ENCODE measurements at regions of chr9 and their contacts with region 1.

Region 1: DNA sequence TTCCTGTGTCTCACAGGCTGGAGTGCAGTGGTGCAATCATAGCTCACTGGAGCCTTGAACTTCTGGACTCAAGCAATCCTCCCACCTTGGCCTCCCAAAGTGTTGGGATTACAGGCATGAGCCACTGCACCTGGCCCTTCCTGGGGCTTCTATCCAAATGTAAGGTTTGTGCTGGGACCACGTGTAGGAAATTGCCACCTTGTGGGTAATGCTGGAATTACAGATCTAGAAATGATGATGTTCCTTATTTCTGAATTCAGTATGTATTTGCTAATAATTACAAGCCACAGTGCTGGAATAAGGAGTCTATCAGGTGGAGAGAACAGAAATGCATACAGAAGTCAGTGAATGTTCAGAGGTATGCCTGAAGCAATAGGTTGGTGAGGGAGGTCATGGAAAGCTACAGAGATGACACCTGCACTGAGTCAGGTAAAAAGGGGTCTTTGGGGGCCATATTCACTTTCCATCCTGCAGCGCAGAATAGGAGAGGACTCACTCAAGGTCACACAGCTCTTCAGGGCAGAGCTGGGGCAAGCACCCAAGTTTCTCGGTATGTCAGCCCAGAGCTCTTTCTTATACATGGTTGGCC is 8.8 kb upstream of the IGFBPL1 start:
- DNase-seq: peak in 1 of 2 experiments; percentile 35
- H3K4me3 ChIP-seq: no peak overlapping the region
- H3K4me3 Mint-ChIP-seq: no peak overlapping the region
- H3K27ac Mint-ChIP-seq: no peak overlapping the region
- H3K4me1 ChIP-seq: peaks cover 29% of the 10 kb centered on the region
- H3K4me1 Mint-ChIP-seq: peaks cover 41% of the 10 kb centered on the region
- H3K27me3 ChIP-seq: no peaks in the 10 kb centered on the region
- H3K27me3 Mint-ChIP-seq: no peaks in the 10 kb centered on the region
- CTCF ChIP-seq: peak; percentile 36 to 72

Region 2: GRCh38 chr9:37800631-37801286 is 632.3 kb before region 1 on chr9 and contains the start of gene DCAF10:
- CTCF ChIA-PET with region 1: no interaction called
- POLR2A ChIA-PET with region 1: no interaction called
- intact Hi-C with region 1: no loop called
- DNase-seq: peak; percentile 90 to 96
- H3K4me3 ChIP-seq: peak within 1 kb of the TSS; percentile 100
- H3K4me3 Mint-ChIP-seq: peak within 1 kb of the TSS; percentile 91
- H3K27ac Mint-ChIP-seq: peak within 1 kb of the TSS; percentile 81
- H3K4me1 ChIP-seq: no peaks in the 10 kb centered on the region; the same call in 1 of the 2 replicates
- H3K4me1 Mint-ChIP-seq: peaks cover 18% of the 10 kb centered on the region
- H3K27me3 ChIP-seq: no peaks in the 10 kb centered on the region
- H3K27me3 Mint-ChIP-seq: no peaks in the 10 kb centered on the region
- CTCF ChIP-seq: no peak
- total RNA-seq, gene DCAF10: 11.4 and 13.5 TPM in 2 replicates

Region 3: DNA sequence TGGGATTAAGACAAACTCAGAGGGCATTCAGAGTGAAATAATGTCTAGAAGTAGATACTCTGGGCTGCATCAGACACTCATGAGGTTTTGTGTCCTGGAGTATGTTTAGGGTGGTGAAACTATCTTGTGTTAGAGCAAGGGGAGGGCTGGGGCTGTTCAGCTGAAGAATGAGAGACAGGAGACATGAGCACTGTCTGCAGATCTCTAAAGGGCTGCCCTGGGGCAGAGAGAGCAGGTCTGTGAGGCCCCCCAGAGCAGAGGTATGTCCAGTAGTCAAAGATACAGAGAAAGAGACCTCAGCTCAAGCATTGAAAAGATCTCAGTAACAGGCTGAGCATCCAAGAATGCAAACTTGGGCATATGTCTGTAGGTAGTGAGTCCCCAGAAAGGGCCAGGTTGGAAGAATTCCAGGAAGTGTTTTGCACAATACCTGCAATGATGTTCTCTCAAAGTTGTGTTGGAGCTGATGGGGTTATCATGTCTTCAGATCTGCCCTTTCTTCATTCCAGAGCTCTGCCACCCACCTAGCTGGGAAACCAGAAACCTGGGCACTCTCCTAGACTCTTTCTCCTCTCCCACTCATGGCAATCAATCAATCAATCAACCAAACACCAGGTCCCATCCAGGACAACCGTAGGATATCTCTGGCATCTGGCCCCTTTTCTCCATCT is 318.0 kb before region 1 on chr9:
- CTCF ChIA-PET with region 1: no interaction called
- POLR2A ChIA-PET with region 1: no interaction called
- intact Hi-C with region 1: no loop called
- DNase-seq: no peak
- H3K4me3 ChIP-seq: no peak overlapping the region
- H3K4me3 Mint-ChIP-seq: no peak overlapping the region
- H3K27ac Mint-ChIP-seq: no peak overlapping the region
- H3K4me1 ChIP-seq: no peaks in the 10 kb centered on the region
- H3K4me1 Mint-ChIP-seq: no peaks in the 10 kb centered on the region
- H3K27me3 ChIP-seq: no peaks in the 10 kb centered on the region
- H3K27me3 Mint-ChIP-seq: peaks cover 3% of the 10 kb centered on the region
- CTCF ChIP-seq: no peak

Region 4: DNA sequence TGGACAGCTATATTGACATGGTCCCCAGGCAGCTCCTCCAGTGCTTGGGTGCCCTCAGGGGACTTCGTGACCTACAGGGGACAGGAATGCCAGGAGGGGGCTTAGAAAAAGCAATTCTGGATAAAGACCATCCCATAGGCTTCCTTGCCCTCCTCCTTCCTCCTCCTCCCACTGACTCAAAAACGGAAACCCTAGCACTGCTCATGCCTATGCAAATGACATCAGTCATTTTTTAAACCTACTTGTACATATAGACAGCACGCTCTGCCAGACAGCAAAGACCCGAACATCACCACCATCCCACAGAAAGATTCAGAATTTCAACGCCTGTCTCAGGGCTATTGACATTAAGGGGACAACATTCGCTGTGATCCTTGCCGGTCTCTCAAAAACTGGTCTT is 19.7 kb before region 1 on chr9:
- CTCF ChIA-PET with region 1: interaction called, 3 read pairs
- POLR2A ChIA-PET with region 1: no interaction called
- intact Hi-C with region 1: loop called (anchors 2 kb)
- DNase-seq: no peak
- H3K4me3 ChIP-seq: no peak overlapping the region
- H3K4me3 Mint-ChIP-seq: no peak overlapping the region
- H3K27ac Mint-ChIP-seq: no peak overlapping the region
- H3K4me1 ChIP-seq: peaks cover 11% of the 10 kb centered on the region
- H3K4me1 Mint-ChIP-seq: peaks cover 11% of the 10 kb centered on the region
- H3K27me3 ChIP-seq: no peaks in the 10 kb centered on the region
- H3K27me3 Mint-ChIP-seq: no peaks in the 10 kb centered on the region
- CTCF ChIP-seq: no peak

Region 5: DNA sequence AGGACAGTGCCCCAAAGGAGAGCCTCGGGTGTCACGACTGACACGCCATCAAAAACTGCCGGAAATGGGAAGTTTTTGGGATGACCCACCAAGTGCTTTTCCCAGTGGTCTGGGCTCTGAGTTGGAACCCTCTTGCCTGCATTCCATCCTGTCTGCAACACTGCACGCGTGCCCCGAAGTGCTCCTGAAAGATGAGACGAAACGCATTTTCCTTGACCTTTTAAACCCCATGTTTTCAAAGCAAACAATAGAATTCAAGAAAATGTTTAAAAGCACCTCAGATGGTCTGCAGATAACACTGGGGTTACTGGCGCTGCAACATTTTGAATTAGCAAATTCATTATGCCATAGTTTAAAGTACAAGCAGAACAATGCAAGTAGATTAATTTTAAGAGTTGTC is 94.5 kb after region 1 on chr9:
- CTCF ChIA-PET with region 1: no interaction called
- POLR2A ChIA-PET with region 1: no interaction called
- intact Hi-C with region 1: no loop called
- DNase-seq: no peak
- H3K4me3 ChIP-seq: no peak overlapping the region
- H3K4me3 Mint-ChIP-seq: no peak overlapping the region
- H3K27ac Mint-ChIP-seq: no peak overlapping the region
- H3K4me1 ChIP-seq: no peaks in the 10 kb centered on the region
- H3K4me1 Mint-ChIP-seq: no peaks in the 10 kb centered on the region
- H3K27me3 ChIP-seq: no peaks in the 10 kb centered on the region
- H3K27me3 Mint-ChIP-seq: peaks cover 4% of the 10 kb centered on the region
- CTCF ChIP-seq: no peak